PC-3 (cell line): ENCODE measurements at regions of chr9 and their contacts with region 1.

Region 1: GRCh38 chr9:4964540-4964939 is 20.5 kb upstream of the JAK2 start:
- DNase-seq: no peak
- ATAC-seq: no peak
- H3K4me3 ChIP-seq: no peak overlapping the region
- H3K27ac ChIP-seq: no peak overlapping the region
- H3K4me1 ChIP-seq: no peaks in the 10 kb centered on the region
- H3K27me3 ChIP-seq: no peaks in the 10 kb centered on the region
- CTCF ChIP-seq: no peak

Region 2: GRCh38 chr9:4904322-4905134 is 60.0 kb before region 1 on chr9:
- CTCF ChIA-PET with region 1: no interaction called
- POLR2A ChIA-PET with region 1: interaction called, 15 read pairs
- intact Hi-C with region 1: no loop called
- DNase-seq: peak; percentile 89
- ATAC-seq: peak; percentile 75
- H3K4me3 ChIP-seq: no peak overlapping the region
- H3K27ac ChIP-seq: peak overlapping the region; percentile 96
- H3K4me1 ChIP-seq: peaks cover 36% of the 10 kb centered on the region
- H3K27me3 ChIP-seq: no peaks in the 10 kb centered on the region
- CTCF ChIP-seq: no peak

Region 3: GRCh38 chr9:5042641-5043277 is 78.2 kb after region 1 on chr9:
- CTCF ChIA-PET with region 1: no interaction called
- POLR2A ChIA-PET with region 1: no interaction called
- intact Hi-C with region 1: no loop called
- DNase-seq: no peak
- ATAC-seq: no peak
- H3K4me3 ChIP-seq: no peak overlapping the region
- H3K27ac ChIP-seq: no peak overlapping the region
- H3K4me1 ChIP-seq: no peaks in the 10 kb centered on the region
- H3K27me3 ChIP-seq: no peaks in the 10 kb centered on the region
- CTCF ChIP-seq: no peak

Region 4: DNA sequence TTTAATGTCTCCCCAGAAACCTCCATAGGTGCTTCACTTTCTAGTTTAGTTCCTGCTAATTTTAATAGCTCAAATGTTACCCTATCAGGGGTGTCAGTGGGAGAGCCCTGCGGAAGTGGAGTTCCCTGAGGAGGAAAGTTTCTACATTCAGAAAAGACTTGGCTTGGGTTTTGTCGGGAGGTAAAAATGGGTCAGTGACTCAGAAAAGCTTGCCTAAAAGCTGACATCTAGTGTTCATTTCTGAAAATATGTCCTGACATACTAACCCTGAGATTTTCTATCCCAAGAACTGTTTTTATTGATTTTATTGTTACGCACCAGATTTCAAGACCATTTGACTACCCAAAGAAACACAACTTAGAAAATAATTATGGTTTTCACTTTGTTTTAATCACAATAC is 1721.9 kb after region 1 on chr9:
- CTCF ChIA-PET with region 1: no interaction called
- POLR2A ChIA-PET with region 1: interaction called, 13 read pairs
- intact Hi-C with region 1: no loop called
- DNase-seq: peak; percentile 40
- ATAC-seq: no peak
- H3K4me3 ChIP-seq: no peak overlapping the region
- H3K27ac ChIP-seq: no peak overlapping the region
- H3K4me1 ChIP-seq: peaks cover 7% of the 10 kb centered on the region; the same call in 1 of the 2 replicates
- H3K27me3 ChIP-seq: no peaks in the 10 kb centered on the region
- CTCF ChIP-seq: peak; percentile 50